ENCODE measurements at regions of chr1 and their contacts with region 1.

Region 1: GRCh38 chr1:2525920-2526823 is at the start of gene PANK4:
- H3K4me3 Mint-ChIP-seq: peak within 1 kb of the TSS; percentile 88
- H3K27ac Mint-ChIP-seq: peak within 1 kb of the TSS; percentile 90
- H3K4me1 Mint-ChIP-seq: peaks cover 40% of the 10 kb centered on the region
- H3K27me3 Mint-ChIP-seq: peaks cover 41% of the 10 kb centered on the region

Region 2: DNA sequence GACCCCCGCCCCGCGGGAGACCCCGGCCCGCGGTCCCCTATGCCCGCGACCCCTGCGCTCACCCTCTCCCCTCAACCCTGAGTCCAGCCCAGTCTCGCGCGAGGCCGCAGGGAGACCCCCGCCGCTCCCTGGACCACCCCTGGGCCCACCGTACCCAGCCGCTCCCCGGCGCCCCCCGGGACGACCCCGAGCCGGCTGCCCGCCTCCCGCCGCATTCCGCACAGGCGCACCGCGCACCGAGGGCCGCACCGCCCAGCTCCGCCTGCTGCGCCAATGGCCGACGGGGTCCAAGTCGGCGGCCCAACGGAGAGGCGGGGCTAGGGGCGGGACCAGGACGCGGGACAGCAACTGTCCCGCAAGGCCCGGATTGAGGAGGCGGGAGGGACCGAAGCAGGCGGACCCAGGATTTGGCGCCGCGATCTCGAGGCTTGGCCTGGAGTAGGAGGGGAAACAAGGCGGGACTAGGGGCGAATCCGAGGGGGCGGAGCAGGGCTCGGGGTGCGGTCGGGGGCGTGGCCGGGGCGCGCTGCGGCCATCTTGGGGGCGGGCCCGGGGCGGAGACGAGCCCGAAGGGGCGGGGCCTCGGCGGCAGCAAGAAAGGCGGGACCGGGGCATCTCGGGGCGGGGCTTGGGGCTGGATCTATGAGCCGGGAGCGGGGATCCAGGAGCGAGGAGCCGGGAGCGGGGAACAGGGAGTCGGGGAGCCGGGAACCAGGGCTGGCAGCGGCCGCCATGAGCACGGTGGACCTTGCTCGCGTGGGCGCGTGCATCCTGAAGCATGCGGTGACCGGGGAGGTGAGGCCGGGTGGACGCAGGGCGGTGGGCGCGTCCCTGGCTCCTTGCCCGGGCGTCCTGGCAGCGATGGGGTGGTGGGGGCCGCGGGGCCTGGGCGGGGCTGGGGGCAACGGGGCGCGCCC is 60.2 kb after region 1 on chr1 and contains the start of gene PRXL2B:
- intact Hi-C with region 1: loop called (anchors 1 kb)
- H3K4me3 Mint-ChIP-seq: peak within 1 kb of the TSS; percentile 86
- H3K27ac Mint-ChIP-seq: peak within 1 kb of the TSS; percentile 98
- H3K4me1 Mint-ChIP-seq: peaks cover 54% of the 10 kb centered on the region
- H3K27me3 Mint-ChIP-seq: peaks cover 13% of the 10 kb centered on the region

Region 3: GRCh38 chr1:2642560-2643413 is 116.6 kb after region 1 on chr1:
- intact Hi-C with region 1: loop called (anchors 10 kb)
- H3K4me3 Mint-ChIP-seq: peak overlapping the region; percentile 79
- H3K27ac Mint-ChIP-seq: peak overlapping the region; percentile 53
- H3K4me1 Mint-ChIP-seq: peaks cover 20% of the 10 kb centered on the region
- H3K27me3 Mint-ChIP-seq: peaks cover 30% of the 10 kb centered on the region

Measured in dendritic cell treated with granulocyte-macrophage colony-stimulating factor and Interleukin-4, amounts not matched to agents 40 ng/mL and 50 ng/mL, for 4 days (primary cell).